Testis (tissue), 5 donors: ENCODE measurements at regions of chr15 and their contacts with region 1.

Region 1: DNA sequence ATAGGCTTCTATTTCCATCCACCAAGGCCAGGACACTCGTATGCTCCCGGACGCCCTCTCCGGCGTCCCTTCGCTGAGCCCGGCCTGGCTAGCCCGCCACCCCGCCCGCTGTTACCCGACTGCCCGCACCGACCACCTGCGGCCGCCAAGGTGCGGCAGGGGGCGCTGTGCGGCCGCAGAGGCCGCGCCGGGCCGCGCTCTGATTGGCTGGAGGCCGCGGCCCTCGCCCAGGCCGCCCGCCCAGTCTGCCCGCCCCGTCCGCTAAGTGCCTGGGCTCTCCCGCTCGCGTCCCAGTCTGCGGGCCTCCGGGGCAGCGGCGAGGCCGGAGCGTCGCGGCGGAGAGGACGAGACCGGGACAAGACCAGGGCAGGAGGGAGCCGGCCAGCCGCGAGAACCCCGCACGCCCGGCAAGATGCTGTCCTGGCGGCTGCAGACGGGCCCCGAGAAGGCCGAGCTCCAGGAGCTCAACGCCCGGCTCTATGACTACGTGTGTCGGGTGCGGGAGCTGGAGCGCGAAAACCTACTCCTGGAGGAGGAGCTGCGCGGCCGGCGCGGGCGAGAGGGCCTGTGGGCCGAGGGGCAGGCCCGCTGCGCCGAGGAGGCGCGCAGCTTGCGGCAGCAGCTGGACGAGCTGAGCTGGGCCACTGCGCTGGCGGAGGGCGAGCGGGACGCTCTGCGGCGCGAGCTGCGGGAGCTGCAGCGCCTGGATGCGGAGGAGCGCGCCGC is at the start of gene SYNM:
- DNase-seq: peak; percentile 78
- H3K4me3 ChIP-seq: peak within 1 kb of the TSS; percentile 56 to 65
- H3K27ac ChIP-seq: peak within 1 kb of the TSS; percentile 66 to 70
- H3K4me1 ChIP-seq: peaks cover 7% of the 10 kb centered on the region
- H3K27me3 ChIP-seq: no peaks in the 10 kb centered on the region
- CTCF ChIP-seq: peak; percentile 84 to 92 (median 87)
- POLR2A ChIP-seq: no peak
- total RNA-seq, gene SYNM: 10.0 to 11.1 TPM

Region 2: GRCh38 chr15:98017150-98017964 is 1087.6 kb before region 1 on chr15:
- intact Hi-C with region 1: no loop called
- DNase-seq: no peak
- H3K4me3 ChIP-seq: no peak overlapping the region
- H3K27ac ChIP-seq: no peak overlapping the region
- H3K4me1 ChIP-seq: no peaks in the 10 kb centered on the region
- H3K27me3 ChIP-seq: no peaks in the 10 kb centered on the region
- CTCF ChIP-seq: no peak
- POLR2A ChIP-seq: no peak

Region 3: GRCh38 chr15:99169769-99170311 is 64.9 kb after region 1 on chr15:
- intact Hi-C with region 1: no loop called
- DNase-seq: peak; percentile 29
- H3K4me3 ChIP-seq: no peak overlapping the region
- H3K27ac ChIP-seq: peak overlapping the region in 1 of 2 donors; percentile 31
- H3K4me1 ChIP-seq: peaks cover 5% of the 10 kb centered on the region
- H3K27me3 ChIP-seq: no peaks in the 10 kb centered on the region
- CTCF ChIP-seq: no peak
- POLR2A ChIP-seq: no peak

Region 4: GRCh38 chr15:99207672-99208071 is 102.7 kb after region 1 on chr15:
- intact Hi-C with region 1: loop called (anchors 5 kb)
- DNase-seq: no peak
- H3K4me3 ChIP-seq: no peak overlapping the region
- H3K27ac ChIP-seq: no peak overlapping the region
- H3K4me1 ChIP-seq: peaks cover 6% of the 10 kb centered on the region
- H3K27me3 ChIP-seq: no peaks in the 10 kb centered on the region
- CTCF ChIP-seq: no peak
- POLR2A ChIP-seq: no peak

Region 5: DNA sequence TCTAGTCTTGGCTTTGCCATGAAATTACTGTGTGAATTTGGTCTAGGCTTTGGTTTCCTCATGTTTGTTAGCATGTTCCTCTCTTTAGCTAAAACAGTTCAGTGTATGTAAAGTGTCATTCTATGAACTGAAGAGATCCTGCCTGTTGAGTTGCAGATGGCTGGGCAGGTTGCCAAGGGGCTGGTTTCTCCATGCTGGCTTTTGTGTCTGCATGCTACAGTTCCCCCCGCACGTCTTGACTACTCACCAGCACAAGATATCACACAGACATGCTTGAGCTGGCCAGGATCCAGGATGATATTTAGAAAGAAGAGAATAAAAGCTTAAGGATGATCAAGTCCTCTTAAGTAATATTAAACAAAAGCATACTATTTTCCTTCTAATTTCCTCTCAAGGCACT is 1333.6 kb after region 1 on chr15:
- intact Hi-C with region 1: no loop called
- DNase-seq: peak; percentile 75
- H3K4me3 ChIP-seq: no peak overlapping the region
- H3K27ac ChIP-seq: no peak overlapping the region
- H3K4me1 ChIP-seq: no peaks in the 10 kb centered on the region
- H3K27me3 ChIP-seq: no peaks in the 10 kb centered on the region
- CTCF ChIP-seq: no peak
- POLR2A ChIP-seq: no peak